ENCODE measurements at regions of chr7 and their contacts with region 1.

Region 1: DNA sequence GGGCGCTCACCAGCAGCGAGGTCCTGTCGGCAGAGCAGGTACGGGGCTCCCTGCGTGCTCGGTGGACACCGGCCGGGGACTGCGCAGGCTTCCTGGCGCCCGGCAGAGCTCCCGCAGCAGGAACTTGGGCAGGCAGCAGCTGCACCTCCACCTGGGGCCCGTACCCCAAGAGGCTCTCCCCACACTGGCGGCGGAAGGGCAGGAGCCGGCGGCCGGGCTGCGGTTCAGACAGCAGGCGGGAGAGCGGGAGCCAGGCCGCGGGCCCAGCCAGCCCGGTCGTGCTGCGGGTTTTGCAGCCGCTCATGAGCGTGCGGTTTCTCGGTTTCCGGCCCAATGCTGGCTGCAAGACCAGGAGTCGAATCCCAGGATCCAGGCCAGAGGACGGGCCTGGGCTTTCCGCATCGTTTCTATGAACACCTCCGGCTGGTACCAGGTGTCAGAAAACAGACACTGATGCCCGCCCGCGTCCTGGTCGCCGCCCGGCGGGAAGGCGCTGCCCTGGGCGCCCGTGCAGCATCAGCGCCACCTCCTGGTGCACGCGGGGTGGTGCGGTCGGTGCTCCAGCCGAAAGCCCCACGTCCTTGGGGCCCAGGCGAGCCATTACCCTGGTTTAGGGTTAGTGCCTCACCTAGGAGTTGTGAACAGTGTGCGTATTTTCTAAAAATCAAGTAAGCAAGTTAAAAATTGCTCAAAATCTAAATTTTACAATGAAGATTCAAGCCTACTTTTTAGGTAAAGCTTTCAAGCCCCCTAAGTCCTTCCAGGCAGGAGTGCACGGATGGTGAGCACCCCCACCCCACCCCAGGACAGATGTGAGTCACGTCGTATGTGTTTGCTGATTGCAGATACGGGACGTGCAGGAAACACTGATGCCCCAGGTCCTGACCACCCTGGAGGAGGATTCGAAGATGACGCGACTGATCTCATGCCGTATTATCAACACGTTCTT is 47.4 kb upstream of the PRKAR1B start:
- DNase-seq: peak; percentile 34 to 79 (median 58)
- ATAC-seq: peak; percentile 93
- H3K4me3 ChIP-seq: no peak overlapping the region
- H3K4me3 Mint-ChIP-seq: no peak overlapping the region
- H3K27ac ChIP-seq: no peak overlapping the region
- H3K27ac Mint-ChIP-seq: no peak overlapping the region
- H3K4me1 ChIP-seq: no peaks in the 10 kb centered on the region
- H3K4me1 Mint-ChIP-seq: no peaks in the 10 kb centered on the region
- H3K27me3 ChIP-seq: no peaks in the 10 kb centered on the region
- H3K27me3 Mint-ChIP-seq: no peaks in the 10 kb centered on the region
- CTCF ChIP-seq: peak; percentile 94

Region 2: DNA sequence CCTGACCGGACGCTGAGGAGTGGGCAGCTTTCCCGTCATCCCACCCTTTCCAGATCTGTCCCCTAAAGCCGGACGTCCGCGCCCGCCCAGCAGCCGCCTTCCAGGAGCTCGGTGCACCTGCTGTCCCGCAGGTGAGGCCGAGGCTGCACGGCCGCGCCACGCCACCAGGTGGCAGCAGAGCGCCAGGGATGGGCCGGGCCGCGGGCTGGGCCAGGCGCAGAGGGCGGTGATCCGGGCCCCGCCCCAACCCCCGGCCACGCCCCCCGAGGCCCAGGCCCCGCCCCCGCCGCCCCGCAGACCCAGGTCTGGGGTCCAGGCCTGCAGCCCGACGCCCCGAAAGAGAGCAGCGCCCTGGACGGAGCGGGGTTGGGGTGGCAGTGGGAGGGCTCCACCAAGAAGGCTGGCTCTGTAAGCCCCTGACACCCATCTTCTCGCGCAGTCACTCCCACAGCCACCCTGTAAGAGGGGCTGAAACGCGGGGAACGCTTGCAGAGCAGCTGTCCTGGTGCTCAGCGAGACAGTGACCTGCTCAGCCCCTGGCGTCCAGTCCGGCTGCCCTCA is 452.2 kb before region 1 on chr7:
- CTCF ChIA-PET with region 1: interaction called, 5 read pairs
- POLR2A ChIA-PET with region 1: no interaction called
- intact Hi-C with region 1: loop called (anchors 1 kb)
- DNase-seq: peak; percentile 67 to 94 (median 86)
- ATAC-seq: peak; percentile 100
- H3K4me3 ChIP-seq: peak overlapping the region; percentile 5
- H3K4me3 Mint-ChIP-seq: no peak overlapping the region
- H3K27ac ChIP-seq: no peak overlapping the region
- H3K27ac Mint-ChIP-seq: no peak overlapping the region
- H3K4me1 ChIP-seq: peaks cover 10% of the 10 kb centered on the region
- H3K4me1 Mint-ChIP-seq: no peaks in the 10 kb centered on the region
- H3K27me3 ChIP-seq: peaks cover 10 to 24% of the 10 kb centered on the region in 2 experiments
- H3K27me3 Mint-ChIP-seq: peaks cover 41% of the 10 kb centered on the region
- CTCF ChIP-seq: peak; percentile 69

Region 3: DNA sequence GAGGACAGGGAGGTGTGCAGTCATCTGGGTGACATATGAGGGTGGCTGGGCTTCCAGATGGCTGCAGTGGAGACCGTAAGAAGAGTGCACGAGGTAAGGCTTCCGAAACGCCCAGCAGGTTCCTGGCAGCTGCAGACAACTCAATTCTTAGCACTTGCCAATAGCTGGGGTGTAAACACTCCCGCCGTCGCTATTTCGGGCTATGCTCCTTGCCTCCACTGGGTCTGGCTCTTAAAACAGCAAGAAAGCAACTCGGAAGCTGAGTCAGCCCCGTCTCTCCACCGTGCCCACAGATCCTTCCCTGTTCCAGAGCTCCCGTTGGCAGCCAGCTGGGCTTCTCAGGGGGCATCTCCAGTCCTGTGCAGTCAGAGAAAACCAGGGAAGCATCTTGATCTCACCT is 248.7 kb before region 1 on chr7:
- CTCF ChIA-PET with region 1: no interaction called
- POLR2A ChIA-PET with region 1: no interaction called
- intact Hi-C with region 1: loop called in 1 of 2 experiments (anchors 5 kb)
- DNase-seq: no peak
- ATAC-seq: no peak
- H3K4me3 ChIP-seq: no peak overlapping the region
- H3K4me3 Mint-ChIP-seq: no peak overlapping the region
- H3K27ac ChIP-seq: no peak overlapping the region
- H3K27ac Mint-ChIP-seq: no peak overlapping the region
- H3K4me1 ChIP-seq: peaks cover 21% of the 10 kb centered on the region
- H3K4me1 Mint-ChIP-seq: no peaks in the 10 kb centered on the region
- H3K27me3 ChIP-seq: peaks cover 27 to 28% of the 10 kb centered on the region in 2 experiments
- H3K27me3 Mint-ChIP-seq: peaks cover 39% of the 10 kb centered on the region
- CTCF ChIP-seq: no peak